Naive thymus-derived CD4-positive, alpha-beta T cell (primary cell): ENCODE measurements at regions of chr1 and their contacts with region 1.

Region 1: GRCh38 chr1:54764133-54764921 is at the start of gene PARS2:
- DNase-seq: peak; percentile 89 to 98 (median 97)
- ATAC-seq: peak; percentile 96
- H3K4me3 ChIP-seq: peak within 1 kb of the TSS; percentile 95
- H3K4me3 Mint-ChIP-seq: peak within 1 kb of the TSS; percentile 94 to 97 (median 96)
- H3K27ac ChIP-seq: peak within 1 kb of the TSS; percentile 83
- H3K27ac Mint-ChIP-seq: peak within 1 kb of the TSS; percentile 81 to 97 (median 93)
- H3K4me1 ChIP-seq: peaks cover 0 to 9% of the 10 kb centered on the region in 2 donors
- H3K4me1 Mint-ChIP-seq: peaks cover 14 to 26% (median 24%) of the 10 kb centered on the region in 7 donors
- H3K27me3 ChIP-seq: no peaks in the 10 kb centered on the region
- H3K27me3 Mint-ChIP-seq: no peaks in the 10 kb centered on the region
- total RNA-seq, gene PARS2: 0.66 to 7.6 (median 4.7) TPM

Region 2: GRCh38 chr1:53889304-53890298 is 874.7 kb before region 1 on chr1 and contains the start of gene YIPF1:
- CTCF ChIA-PET with region 1: no interaction called
- POLR2A ChIA-PET with region 1: no interaction called
- intact Hi-C with region 1: loop called in 1 of 2 experiments (anchors 2 kb)
- DNase-seq: peak; percentile 61 to 88 (median 85)
- ATAC-seq: peak; percentile 98
- H3K4me3 ChIP-seq: peak within 1 kb of the TSS; percentile 79
- H3K4me3 Mint-ChIP-seq: peak within 1 kb of the TSS; percentile 88 to 98 (median 96)
- H3K27ac ChIP-seq: peak within 1 kb of the TSS; percentile 75
- H3K27ac Mint-ChIP-seq: peak within 1 kb of the TSS; percentile 89 to 97 (median 95)
- H3K4me1 ChIP-seq: peaks cover 20 to 23% of the 10 kb centered on the region in 2 donors
- H3K4me1 Mint-ChIP-seq: peaks cover 26 to 55% (median 51%) of the 10 kb centered on the region in 7 donors
- H3K27me3 ChIP-seq: no peaks in the 10 kb centered on the region
- H3K27me3 Mint-ChIP-seq: peaks cover 0 to 2% (median 0%) of the 10 kb centered on the region in 5 donors
- total RNA-seq, gene YIPF1: 10.5 to 18.0 (median 16.3) TPM

Region 3: DNA sequence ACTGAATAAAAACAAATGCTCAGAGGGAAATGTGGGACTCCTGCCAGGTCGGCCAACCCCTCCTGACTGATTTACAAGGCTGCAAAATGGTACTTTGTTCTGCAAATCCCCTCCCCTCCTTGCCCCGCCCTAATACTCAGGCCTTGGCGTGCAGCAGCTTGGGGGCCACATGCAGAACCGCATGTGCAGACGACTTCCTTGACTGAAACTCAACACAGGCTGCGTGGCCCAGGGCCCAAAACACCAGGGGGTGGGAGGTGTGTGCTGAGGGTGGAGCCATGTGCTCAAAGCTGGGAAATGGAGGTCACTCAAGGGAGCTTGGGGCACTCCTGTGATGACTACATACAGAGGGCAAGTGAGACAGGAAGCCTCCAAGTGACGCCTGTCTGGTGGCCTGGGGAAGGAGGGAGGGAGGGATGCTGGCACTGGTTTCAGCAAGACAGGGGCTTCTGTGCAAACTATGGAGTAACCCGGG is 477.1 kb before region 1 on chr1:
- CTCF ChIA-PET with region 1: no interaction called
- POLR2A ChIA-PET with region 1: no interaction called
- intact Hi-C with region 1: loop called in 1 of 2 experiments (anchors 1 kb)
- DNase-seq: peak; percentile 21 to 82 (median 73)
- ATAC-seq: peak; percentile 76
- H3K4me3 ChIP-seq: peak overlapping the region; percentile 21
- H3K4me3 Mint-ChIP-seq: peak overlapping the region; percentile 79 to 90 (median 87)
- H3K27ac ChIP-seq: peak overlapping the region; percentile 85
- H3K27ac Mint-ChIP-seq: peak overlapping the region; percentile 87 to 99 (median 96)
- H3K4me1 ChIP-seq: peaks cover 6 to 90% of the 10 kb centered on the region in 2 donors
- H3K4me1 Mint-ChIP-seq: peaks cover 59 to 100% (median 94%) of the 10 kb centered on the region in 7 donors
- H3K27me3 ChIP-seq: no peaks in the 10 kb centered on the region
- H3K27me3 Mint-ChIP-seq: no peaks in the 10 kb centered on the region

Region 4: GRCh38 chr1:54800899-54801759 is 36.8 kb after region 1 on chr1 and contains the start of gene TTC22:
- CTCF ChIA-PET with region 1: interaction called, 10 read pairs
- POLR2A ChIA-PET with region 1: interaction called, 3 read pairs
- intact Hi-C with region 1: loop called (anchors 1 kb)
- DNase-seq: peak; percentile 49 to 71 (median 64)
- ATAC-seq: peak; percentile 91
- H3K4me3 ChIP-seq: peak within 1 kb of the TSS; percentile 94
- H3K4me3 Mint-ChIP-seq: peak within 1 kb of the TSS; percentile 90 to 99 (median 96)
- H3K27ac ChIP-seq: peak within 1 kb of the TSS; percentile 74
- H3K27ac Mint-ChIP-seq: peak within 1 kb of the TSS; percentile 82 to 97 (median 90)
- H3K4me1 ChIP-seq: peaks cover 38 to 44% of the 10 kb centered on the region in 2 donors
- H3K4me1 Mint-ChIP-seq: peaks cover 32 to 77% (median 56%) of the 10 kb centered on the region in 7 donors
- H3K27me3 ChIP-seq: no peaks in the 10 kb centered on the region
- H3K27me3 Mint-ChIP-seq: no peaks in the 10 kb centered on the region
- total RNA-seq, gene TTC22: 7.0 to 16.6 (median 9.8) TPM

Region 5: GRCh38 chr1:54812801-54813484 is 48.6 kb after region 1 on chr1:
- CTCF ChIA-PET with region 1: no interaction called
- POLR2A ChIA-PET with region 1: no interaction called
- intact Hi-C with region 1: no loop called
- DNase-seq: no peak
- ATAC-seq: peak; percentile 26
- H3K4me3 ChIP-seq: no peak overlapping the region
- H3K4me3 Mint-ChIP-seq: peak overlapping the region in 1 of 10 donors; percentile 16
- H3K27ac ChIP-seq: no peak overlapping the region
- H3K27ac Mint-ChIP-seq: no peak overlapping the region
- H3K4me1 ChIP-seq: peaks cover 0 to 2% of the 10 kb centered on the region in 2 donors
- H3K4me1 Mint-ChIP-seq: peaks cover 2 to 17% (median 9%) of the 10 kb centered on the region in 7 donors
- H3K27me3 ChIP-seq: no peaks in the 10 kb centered on the region
- H3K27me3 Mint-ChIP-seq: no peaks in the 10 kb centered on the region

Region 6: DNA sequence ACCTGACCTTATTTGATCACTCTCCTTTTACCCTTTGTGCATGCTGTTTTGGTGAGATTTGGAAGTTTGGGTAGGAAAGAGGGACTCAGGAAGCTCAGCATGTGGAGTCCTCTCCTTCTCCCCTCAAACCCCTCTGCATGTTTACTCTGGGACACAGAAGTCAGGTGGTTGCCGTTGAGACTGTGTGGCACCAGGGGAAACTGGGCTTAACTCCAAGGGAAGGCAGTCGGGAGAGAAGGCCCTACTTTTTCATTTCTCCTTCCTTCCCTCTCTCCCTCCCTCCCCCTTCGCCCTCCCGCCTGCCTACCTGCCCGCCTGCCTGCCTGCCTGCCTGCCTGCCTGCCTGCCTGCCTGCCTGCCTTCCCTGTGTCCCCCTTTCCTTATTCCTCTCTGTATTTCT is 71.6 kb after region 1 on chr1:
- CTCF ChIA-PET with region 1: no interaction called
- POLR2A ChIA-PET with region 1: no interaction called
- intact Hi-C with region 1: no loop called
- DNase-seq: no peak
- ATAC-seq: no peak
- H3K4me3 ChIP-seq: no peak overlapping the region
- H3K4me3 Mint-ChIP-seq: no peak overlapping the region
- H3K27ac ChIP-seq: no peak overlapping the region
- H3K27ac Mint-ChIP-seq: no peak overlapping the region
- H3K4me1 ChIP-seq: no peaks in the 10 kb centered on the region
- H3K4me1 Mint-ChIP-seq: no peaks in the 10 kb centered on the region
- H3K27me3 ChIP-seq: no peaks in the 10 kb centered on the region
- H3K27me3 Mint-ChIP-seq: peaks cover 0 to 5% (median 0%) of the 10 kb centered on the region in 5 donors